ENCODE measurements at regions of chr20 and their contacts with region 1.

Region 1: DNA sequence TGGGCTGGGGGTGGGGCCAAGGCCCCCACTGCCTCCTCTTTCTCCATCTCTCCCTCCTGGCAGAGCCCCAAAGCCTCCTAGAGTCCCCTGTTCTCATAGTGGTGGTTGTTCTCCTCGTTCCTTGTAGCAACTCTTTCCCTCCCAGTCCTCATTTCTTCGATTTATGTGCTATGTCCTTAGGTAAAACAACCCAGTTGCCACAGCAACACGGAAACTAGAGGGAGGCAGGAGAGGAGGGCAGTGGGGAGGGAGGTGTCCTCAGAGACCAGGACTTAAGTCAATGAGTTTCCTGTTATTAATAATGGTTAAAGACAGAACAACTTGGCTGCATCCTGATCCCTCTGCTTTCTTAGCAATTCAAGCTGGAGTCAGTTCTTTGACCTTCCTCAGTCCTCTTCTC is 161.0 kb downstream of the INSM1 start:
- DNase-seq: no peak
- ATAC-seq: no peak
- H3K4me3 ChIP-seq: no peak overlapping the region
- H3K27ac ChIP-seq: no peak overlapping the region
- H3K4me1 ChIP-seq: no peaks in the 10 kb centered on the region
- H3K27me3 ChIP-seq: no peaks in the 10 kb centered on the region
- CTCF ChIP-seq: no peak

Region 2: GRCh38 chr20:20549718-20550117 is 20.9 kb after region 1 on chr20:
- intact Hi-C with region 1: loop called in 1 of 2 experiments (anchors 2 kb)
- DNase-seq: no peak
- ATAC-seq: peak; percentile 57
- H3K4me3 ChIP-seq: no peak overlapping the region
- H3K27ac ChIP-seq: no peak overlapping the region
- H3K4me1 ChIP-seq: no peaks in the 10 kb centered on the region
- H3K27me3 ChIP-seq: no peaks in the 10 kb centered on the region
- CTCF ChIP-seq: no peak